Calu3 (cell line): ENCODE measurements at regions of chr6 and their contacts with region 1.

Region 1: GRCh38 chr6:56708810-56709597 is 66.3 kb upstream of the DST start:
- DNase-seq: no peak
- H3K4me3 Mint-ChIP-seq: peak overlapping the region; percentile 5
- H3K27ac Mint-ChIP-seq: peak overlapping the region; percentile 52
- H3K4me1 Mint-ChIP-seq: peaks cover 36% of the 10 kb centered on the region
- H3K27me3 Mint-ChIP-seq: no peaks in the 10 kb centered on the region
- CTCF ChIP-seq: peak; percentile 35

Region 2: GRCh38 chr6:56659721-56660380 is 49.2 kb before region 1 on chr6:
- CTCF ChIA-PET with region 1: no interaction called
- intact Hi-C with region 1: no loop called
- DNase-seq: no peak
- H3K4me3 Mint-ChIP-seq: no peak overlapping the region
- H3K27ac Mint-ChIP-seq: peak overlapping the region; percentile 35
- H3K4me1 Mint-ChIP-seq: peaks cover 67% of the 10 kb centered on the region
- H3K27me3 Mint-ChIP-seq: no peaks in the 10 kb centered on the region
- CTCF ChIP-seq: no peak

Region 3: DNA sequence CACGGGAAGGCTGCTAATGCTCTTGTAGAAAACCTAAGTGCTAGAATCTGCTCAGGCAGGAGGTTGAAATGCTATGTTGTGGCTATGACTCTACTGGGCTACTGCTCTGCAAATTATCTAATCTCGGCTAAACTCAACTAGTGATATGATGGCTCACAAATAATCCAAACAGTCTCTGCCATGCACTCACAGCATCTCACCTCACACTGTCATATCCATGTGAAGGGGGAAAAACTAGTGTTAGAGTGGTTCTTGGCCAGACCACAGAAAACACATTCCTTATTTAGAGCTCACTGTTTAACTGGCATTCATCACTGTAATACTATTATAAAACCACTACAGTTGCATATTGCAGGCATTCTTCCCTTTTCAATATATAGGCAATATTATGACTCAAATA is 15.5 kb after region 1 on chr6:
- CTCF ChIA-PET with region 1: interaction called, 9 read pairs
- intact Hi-C with region 1: loop called (anchors 2 kb)
- DNase-seq: no peak
- H3K4me3 Mint-ChIP-seq: no peak overlapping the region
- H3K27ac Mint-ChIP-seq: peak overlapping the region; percentile 42
- H3K4me1 Mint-ChIP-seq: peaks cover 57% of the 10 kb centered on the region
- H3K27me3 Mint-ChIP-seq: no peaks in the 10 kb centered on the region
- CTCF ChIP-seq: no peak

Region 4: GRCh38 chr6:56730663-56731529 is 21.9 kb after region 1 on chr6:
- CTCF ChIA-PET with region 1: interaction called, 9 read pairs
- intact Hi-C with region 1: loop called (anchors 1 kb)
- DNase-seq: no peak
- H3K4me3 Mint-ChIP-seq: no peak overlapping the region
- H3K27ac Mint-ChIP-seq: peak overlapping the region; percentile 82
- H3K4me1 Mint-ChIP-seq: peaks cover 78% of the 10 kb centered on the region
- H3K27me3 Mint-ChIP-seq: no peaks in the 10 kb centered on the region
- CTCF ChIP-seq: no peak

Region 5: DNA sequence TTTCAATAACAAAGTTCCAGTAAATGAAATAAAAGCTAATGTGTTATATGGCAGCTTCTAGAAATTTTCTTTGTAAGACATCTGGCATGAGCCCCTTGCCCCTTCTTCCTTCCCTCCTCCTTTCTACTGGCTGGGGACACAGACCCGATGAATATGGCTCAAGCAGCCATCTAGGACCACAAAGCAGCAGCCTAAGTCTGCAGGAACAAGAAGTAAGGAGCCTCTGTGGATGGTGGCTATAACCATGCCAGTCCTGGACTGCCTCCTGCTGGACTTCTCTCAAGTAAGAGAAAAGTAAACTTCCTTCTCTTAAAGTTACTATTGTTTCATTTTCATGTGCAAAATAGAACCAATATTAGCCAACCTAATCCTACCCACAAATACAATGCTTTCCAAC is 48.6 kb after region 1 on chr6:
- CTCF ChIA-PET with region 1: interaction called, 15 read pairs
- intact Hi-C with region 1: loop called (anchors 1 kb)
- DNase-seq: peak; percentile 54
- H3K4me3 Mint-ChIP-seq: no peak overlapping the region
- H3K27ac Mint-ChIP-seq: no peak overlapping the region
- H3K4me1 Mint-ChIP-seq: peaks cover 57% of the 10 kb centered on the region
- H3K27me3 Mint-ChIP-seq: no peaks in the 10 kb centered on the region
- CTCF ChIP-seq: peak; percentile 60

Region 6: DNA sequence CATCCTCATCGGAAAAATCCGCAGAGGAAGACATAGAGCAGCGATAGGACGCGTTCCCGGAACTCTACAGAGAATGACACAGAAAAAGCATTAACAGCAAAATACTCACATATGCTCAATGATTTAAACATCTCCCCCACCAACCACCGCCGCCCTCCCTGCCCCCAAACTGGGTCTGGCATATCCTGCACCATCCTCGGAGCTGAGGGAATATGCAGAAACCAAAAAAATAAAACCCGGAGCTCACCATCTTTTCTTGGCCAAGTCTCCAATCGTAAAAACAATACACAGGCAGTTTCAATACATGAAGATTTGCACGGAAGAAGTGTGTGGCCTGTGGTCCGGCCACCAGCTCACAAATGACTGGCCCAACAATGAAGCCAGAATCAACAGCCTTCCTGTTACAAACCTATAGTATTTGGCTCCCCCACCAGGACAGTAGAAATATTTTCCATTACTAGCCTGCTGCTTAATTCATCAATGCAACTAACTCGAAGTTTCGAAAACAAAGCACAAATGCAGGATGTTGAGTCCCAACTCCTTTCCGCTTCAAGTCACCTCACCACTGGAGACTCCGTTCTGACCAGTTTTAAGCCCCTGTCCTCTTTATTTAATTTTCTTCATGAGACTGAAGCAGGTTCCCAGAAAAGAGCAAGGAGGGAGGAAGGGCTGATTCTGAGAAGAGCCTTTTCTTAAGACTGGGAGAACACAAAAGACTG is 142.7 kb after region 1 on chr6:
- CTCF ChIA-PET with region 1: interaction called, 5 read pairs
- intact Hi-C with region 1: loop called (anchors 2 kb)
- DNase-seq: peak; percentile 70
- H3K4me3 Mint-ChIP-seq: peak overlapping the region; percentile 97
- H3K27ac Mint-ChIP-seq: peak overlapping the region; percentile 91
- H3K4me1 Mint-ChIP-seq: peaks cover 43% of the 10 kb centered on the region
- H3K27me3 Mint-ChIP-seq: no peaks in the 10 kb centered on the region
- CTCF ChIP-seq: peak; percentile 39